CD4-positive, alpha-beta memory T cell (primary cell): ENCODE measurements at regions of chr15 and their contacts with region 1.

Region 1: DNA sequence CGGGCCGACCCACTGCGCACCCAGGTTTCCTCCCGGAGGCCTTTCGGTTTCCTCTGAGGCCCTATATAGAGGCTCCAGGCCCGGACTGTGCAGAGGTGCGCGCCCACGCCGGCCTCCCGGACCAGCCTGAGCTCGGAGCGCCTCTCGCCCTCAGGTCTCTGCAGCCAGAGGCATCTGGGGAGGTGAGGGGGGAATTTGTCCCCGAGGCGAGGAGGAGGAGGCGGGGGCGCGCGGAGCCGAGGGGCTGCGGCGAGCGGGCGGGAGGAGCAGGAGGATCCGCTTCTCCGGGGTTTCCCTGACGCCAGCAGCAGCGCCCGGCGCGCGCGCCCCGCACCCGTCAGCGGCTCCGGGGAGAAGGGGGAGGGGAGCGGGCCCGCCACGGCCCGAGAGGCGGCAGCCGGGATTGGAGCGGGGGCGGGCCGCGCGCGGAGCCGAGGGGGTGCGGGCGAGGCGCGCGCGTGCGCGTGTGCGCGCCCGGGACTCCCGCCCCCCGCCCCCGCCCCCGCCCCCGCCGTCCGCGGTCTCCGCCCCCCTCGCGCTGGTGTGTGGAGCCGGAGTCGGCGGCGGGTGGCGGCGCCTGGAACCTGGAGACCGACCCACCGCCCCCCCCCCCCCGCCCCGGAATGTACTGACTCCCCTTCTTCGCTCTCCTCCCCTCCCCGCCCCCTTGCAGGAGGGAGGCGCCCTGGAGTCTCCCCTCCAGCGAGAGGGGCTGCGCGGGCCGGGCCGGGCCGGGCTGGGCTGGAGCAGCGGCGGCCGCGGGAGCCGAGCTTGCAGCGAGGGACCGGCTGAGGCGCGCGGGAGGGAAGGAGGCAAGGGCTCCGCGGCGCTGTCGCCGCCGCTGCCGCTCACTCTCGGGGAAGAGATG is at the start of gene NEO1:
- DNase-seq: peak; percentile 87 to 89 (median 87)
- H3K4me3 ChIP-seq: peak within 1 kb of the TSS; percentile 31 to 67
- H3K4me3 Mint-ChIP-seq: peak within 1 kb of the TSS; percentile 87 to 91 (median 90)
- H3K27ac ChIP-seq: peak within 1 kb of the TSS; percentile 73
- H3K27ac Mint-ChIP-seq: peak within 1 kb of the TSS; percentile 74 to 93 (median 84)
- H3K4me1 ChIP-seq: peaks cover 11% of the 10 kb centered on the region
- H3K4me1 Mint-ChIP-seq: peaks cover 9 to 14% (median 11%) of the 10 kb centered on the region in 4 donors
- H3K27me3 ChIP-seq: no peaks in the 10 kb centered on the region
- H3K27me3 Mint-ChIP-seq: no peaks in the 10 kb centered on the region
- total RNA-seq, gene NEO1: 11.3 to 15.7 TPM

Region 2: GRCh38 chr15:72117486-72118399 is 934.3 kb before region 1 on chr15 and contains the start of gene MYO9A:
- CTCF ChIA-PET with region 1: no interaction called
- POLR2A ChIA-PET with region 1: no interaction called
- intact Hi-C with region 1: loop called (anchors 5 kb)
- DNase-seq: peak; percentile 97 to 98 (median 98)
- H3K4me3 ChIP-seq: peak within 1 kb of the TSS; percentile 89
- H3K4me3 Mint-ChIP-seq: peak within 1 kb of the TSS; percentile 93 to 100 (median 98)
- H3K27ac ChIP-seq: peak within 1 kb of the TSS; percentile 94
- H3K27ac Mint-ChIP-seq: peak within 1 kb of the TSS; percentile 96 to 99 (median 99)
- H3K4me1 ChIP-seq: peaks cover 23% of the 10 kb centered on the region
- H3K4me1 Mint-ChIP-seq: peaks cover 27 to 60% (median 41%) of the 10 kb centered on the region in 4 donors
- H3K27me3 ChIP-seq: no peaks in the 10 kb centered on the region
- H3K27me3 Mint-ChIP-seq: no peaks in the 10 kb centered on the region
- total RNA-seq, gene MYO9A: 37.9 to 44.0 TPM

Region 3: DNA sequence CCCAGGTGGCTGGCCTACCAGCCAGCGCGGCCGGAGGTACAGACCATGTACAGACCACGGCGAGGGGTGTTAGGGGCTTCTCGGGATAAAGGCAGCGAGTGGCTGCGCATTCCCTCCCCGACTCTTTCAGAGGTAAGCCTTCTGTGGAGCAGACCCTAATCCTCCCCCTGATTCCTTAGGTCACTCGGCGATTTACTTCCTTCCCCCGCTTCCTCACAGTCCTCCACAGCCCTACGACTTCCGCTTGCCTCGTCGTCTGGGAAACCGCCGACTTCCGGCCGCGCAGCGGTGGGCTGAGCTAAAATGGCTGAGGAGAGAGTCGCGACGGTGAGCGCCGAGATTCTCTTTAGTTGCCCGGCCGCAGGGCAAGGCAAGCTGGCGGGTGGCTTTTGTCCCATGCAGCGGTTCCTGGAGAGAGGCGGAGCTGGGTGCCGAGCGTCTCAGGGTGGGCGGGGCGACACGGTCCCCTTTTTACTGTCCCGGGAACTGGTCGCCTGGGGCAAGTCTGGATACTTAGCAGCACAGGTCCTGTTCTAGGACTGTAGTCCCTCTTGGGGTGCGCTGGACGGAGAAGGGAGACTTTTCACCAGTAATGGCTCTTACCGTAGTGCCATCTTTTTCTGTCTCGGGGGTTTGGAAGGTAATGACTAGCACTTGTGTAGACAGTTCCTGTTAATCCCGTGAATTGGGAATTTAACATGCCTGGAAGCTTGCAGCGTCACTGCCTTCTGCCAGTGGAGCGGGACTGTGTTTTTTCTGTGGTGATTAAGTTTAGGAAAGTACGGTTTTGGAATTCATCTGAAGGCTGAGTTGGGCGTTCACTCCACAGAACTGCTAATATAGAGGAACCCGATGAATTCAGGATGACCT is 365.9 kb before region 1 on chr15 and contains the starts of genes BBS4 and HIGD2B:
- CTCF ChIA-PET with region 1: no interaction called
- POLR2A ChIA-PET with region 1: no interaction called
- intact Hi-C with region 1: loop called (anchors 5 kb)
- DNase-seq: peak; percentile 81 to 86 (median 83)
- H3K4me3 ChIP-seq: peak within 1 kb of the TSS; percentile 95 to 97
- H3K4me3 Mint-ChIP-seq: peak within 1 kb of the TSS; percentile 94 to 99 (median 98)
- H3K27ac ChIP-seq: peak within 1 kb of the TSS; percentile 76
- H3K27ac Mint-ChIP-seq: peak within 1 kb of the TSS; percentile 88 to 99 (median 97)
- H3K4me1 ChIP-seq: peaks cover 15% of the 10 kb centered on the region
- H3K4me1 Mint-ChIP-seq: peaks cover 10 to 21% (median 16%) of the 10 kb centered on the region in 4 donors
- H3K27me3 ChIP-seq: no peaks in the 10 kb centered on the region
- H3K27me3 Mint-ChIP-seq: no peaks in the 10 kb centered on the region
- total RNA-seq, gene BBS4: 19.1 to 22.2 TPM
- total RNA-seq, gene HIGD2B: 0.39 to 0.41 TPM

Region 4: DNA sequence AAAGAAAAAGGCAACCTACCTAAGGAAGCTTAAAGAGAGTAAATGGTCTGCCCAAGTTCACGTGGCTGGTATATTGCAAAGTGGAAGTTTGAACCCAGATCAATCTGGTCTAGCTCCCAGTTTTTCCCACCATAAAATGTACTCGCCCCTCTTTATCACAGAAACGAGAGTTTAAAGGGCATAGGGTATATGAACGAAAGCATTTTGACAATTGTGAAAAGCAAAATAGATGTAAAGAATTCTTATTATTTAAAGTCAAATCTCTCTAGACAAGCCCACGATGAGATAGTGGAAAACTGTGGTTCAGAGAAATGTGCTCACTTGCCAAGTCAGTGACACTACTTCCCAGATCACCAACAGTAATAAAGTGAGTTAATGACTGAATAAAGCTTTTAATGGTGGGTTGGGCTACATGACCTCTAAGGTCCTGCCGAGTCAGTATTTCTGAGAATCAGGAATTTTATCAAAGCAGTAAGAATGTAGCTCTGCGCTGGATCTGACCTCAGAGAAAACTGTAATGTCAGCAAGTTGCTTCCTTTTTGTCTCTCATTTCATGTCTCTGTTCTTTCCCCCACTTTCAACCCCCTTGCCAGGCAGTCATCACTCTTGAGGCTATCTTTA is 23.1 kb before region 1 on chr15:
- CTCF ChIA-PET with region 1: no interaction called
- POLR2A ChIA-PET with region 1: no interaction called
- intact Hi-C with region 1: no loop called
- DNase-seq: no peak
- H3K4me3 ChIP-seq: no peak overlapping the region
- H3K4me3 Mint-ChIP-seq: no peak overlapping the region
- H3K27ac ChIP-seq: no peak overlapping the region
- H3K27ac Mint-ChIP-seq: no peak overlapping the region
- H3K4me1 ChIP-seq: no peaks in the 10 kb centered on the region
- H3K4me1 Mint-ChIP-seq: no peaks in the 10 kb centered on the region
- H3K27me3 ChIP-seq: no peaks in the 10 kb centered on the region
- H3K27me3 Mint-ChIP-seq: peaks cover 13 to 18% of the 10 kb centered on the region in 2 donors

Region 5: GRCh38 chr15:73081321-73081958 is 29.4 kb after region 1 on chr15:
- CTCF ChIA-PET with region 1: interaction called, 8 read pairs
- POLR2A ChIA-PET with region 1: interaction called, 5 read pairs
- intact Hi-C with region 1: loop called (anchors 1 kb)
- DNase-seq: peak in 4 of 5 donors; percentile 40 to 51 (median 44)
- H3K4me3 ChIP-seq: no peak overlapping the region
- H3K4me3 Mint-ChIP-seq: no peak overlapping the region
- H3K27ac ChIP-seq: no peak overlapping the region
- H3K27ac Mint-ChIP-seq: no peak overlapping the region
- H3K4me1 ChIP-seq: no peaks in the 10 kb centered on the region
- H3K4me1 Mint-ChIP-seq: peaks cover 0 to 4% (median under 1%) of the 10 kb centered on the region in 4 donors
- H3K27me3 ChIP-seq: no peaks in the 10 kb centered on the region
- H3K27me3 Mint-ChIP-seq: no peaks in the 10 kb centered on the region

Region 6: DNA sequence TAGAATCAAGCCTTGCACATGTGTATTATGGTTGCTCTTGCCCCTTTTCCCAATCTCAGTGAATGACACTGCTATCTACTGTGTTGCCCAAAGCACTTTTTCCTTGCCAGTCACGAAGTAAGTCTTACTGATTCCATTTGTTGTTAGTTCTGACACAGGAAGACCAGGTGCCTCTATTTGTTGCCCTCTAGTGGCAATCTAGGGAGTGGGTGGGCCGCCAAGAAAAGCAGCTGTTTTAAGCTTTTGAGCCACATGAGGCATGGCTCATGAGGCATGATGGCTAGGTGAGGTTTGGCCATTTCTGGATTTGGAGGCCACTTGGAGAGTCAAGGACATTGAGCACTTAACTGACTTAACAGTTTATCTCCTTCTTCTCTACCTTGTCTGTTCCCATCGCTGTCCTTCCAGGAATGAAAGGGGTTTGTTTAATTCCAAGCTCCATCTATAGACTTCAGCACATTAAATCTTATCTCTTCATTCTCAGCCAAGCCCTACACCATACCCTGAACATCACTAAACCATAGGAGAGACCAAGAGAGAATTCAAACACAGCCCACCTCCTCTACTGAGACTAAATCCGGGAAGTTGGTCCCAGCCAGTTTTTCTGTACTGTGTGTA is 213.6 kb after region 1 on chr15:
- CTCF ChIA-PET with region 1: no interaction called
- POLR2A ChIA-PET with region 1: no interaction called
- intact Hi-C with region 1: loop called (anchors 5 kb)
- DNase-seq: peak; percentile 38 to 56 (median 44)
- H3K4me3 ChIP-seq: no peak overlapping the region
- H3K4me3 Mint-ChIP-seq: no peak overlapping the region
- H3K27ac ChIP-seq: no peak overlapping the region
- H3K27ac Mint-ChIP-seq: peak overlapping the region in 1 of 7 donors; percentile 69
- H3K4me1 ChIP-seq: no peaks in the 10 kb centered on the region
- H3K4me1 Mint-ChIP-seq: peaks cover 0 to 9% (median 7%) of the 10 kb centered on the region in 4 donors
- H3K27me3 ChIP-seq: no peaks in the 10 kb centered on the region
- H3K27me3 Mint-ChIP-seq: no peaks in the 10 kb centered on the region